SK-N-SH (cell line): ENCODE measurements at regions of chr7 and their contacts with region 1.

Region 1: GRCh38 chr7:156949541-156950380 is at the start of gene NOM1:
- DNase-seq: peak; percentile 99
- H3K4me3 ChIP-seq: peak within 1 kb of the TSS; percentile 85 to 94
- H3K27ac ChIP-seq: peak within 1 kb of the TSS; percentile 63 to 71
- H3K4me1 ChIP-seq: peaks cover 5 to 21% of the 10 kb centered on the region in 2 experiments; a peak in 3 of 4 replicates
- H3K27me3 ChIP-seq: no peaks in the 10 kb centered on the region
- CTCF ChIP-seq: peak; percentile 63
- EP300 ChIP-seq: no peak
- RAD21 ChIP-seq: peak; percentile 48
- polyA plus RNA-seq, gene NOM1: 18.1 and 21.2 TPM in 2 replicates

Region 2: GRCh38 chr7:156534925-156535324 is 414.8 kb before region 1 on chr7:
- CTCF ChIA-PET with region 1: no interaction called
- POLR2A ChIA-PET with region 1: no interaction called
- DNase-seq: no peak
- H3K4me3 ChIP-seq: no peak overlapping the region
- H3K27ac ChIP-seq: no peak overlapping the region
- H3K4me1 ChIP-seq: no peaks in the 10 kb centered on the region
- H3K27me3 ChIP-seq: no peaks in the 10 kb centered on the region; the same call in 1 of the 2 replicates
- CTCF ChIP-seq: no peak
- EP300 ChIP-seq: no peak
- RAD21 ChIP-seq: no peak

Region 3: GRCh38 chr7:156903232-156903909 is 46.4 kb before region 1 on chr7:
- CTCF ChIA-PET with region 1: interaction called, 16 read pairs
- POLR2A ChIA-PET with region 1: no interaction called
- DNase-seq: no peak
- H3K4me3 ChIP-seq: no peak overlapping the region
- H3K27ac ChIP-seq: no peak overlapping the region
- H3K4me1 ChIP-seq: peaks cover 0 to 5% of the 10 kb centered on the region in 2 experiments; a peak in 1 of 4 replicates
- H3K27me3 ChIP-seq: no peaks in the 10 kb centered on the region
- CTCF ChIP-seq: no peak
- EP300 ChIP-seq: no peak
- RAD21 ChIP-seq: no peak

Region 4: DNA sequence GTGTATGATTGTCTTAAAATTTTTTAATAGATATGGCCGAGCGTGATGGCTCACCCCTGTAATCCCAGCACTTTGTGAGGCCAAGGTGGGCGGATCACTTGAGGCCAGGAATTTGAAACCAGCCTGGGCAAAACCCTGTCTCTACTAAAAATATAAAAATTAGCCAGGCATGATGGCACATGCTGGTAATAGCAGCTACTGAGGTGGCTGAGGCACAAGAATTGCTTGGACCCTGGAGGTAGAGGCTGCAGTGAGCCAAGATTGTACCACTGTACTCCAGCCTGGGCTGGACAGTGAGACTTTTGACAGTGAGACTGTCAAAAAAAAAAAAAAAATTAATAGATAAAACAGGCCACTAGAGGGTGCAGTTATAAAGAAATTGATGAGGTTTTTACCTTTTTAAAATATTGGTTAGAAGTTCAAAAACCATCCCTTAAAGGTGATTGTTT is 20.2 kb after region 1 on chr7:
- CTCF ChIA-PET with region 1: interaction called, 73 read pairs
- POLR2A ChIA-PET with region 1: no interaction called
- DNase-seq: no peak
- H3K4me3 ChIP-seq: no peak overlapping the region
- H3K27ac ChIP-seq: no peak overlapping the region
- H3K4me1 ChIP-seq: no peaks in the 10 kb centered on the region
- H3K27me3 ChIP-seq: no peaks in the 10 kb centered on the region
- CTCF ChIP-seq: peak; percentile 74
- EP300 ChIP-seq: no peak
- RAD21 ChIP-seq: peak; percentile 56

Region 5: GRCh38 chr7:157111311-157111710 is 161.6 kb after region 1 on chr7:
- CTCF ChIA-PET with region 1: no interaction called
- POLR2A ChIA-PET with region 1: no interaction called
- DNase-seq: no peak
- H3K4me3 ChIP-seq: no peak overlapping the region; a peak in 1 of 4 replicates
- H3K27ac ChIP-seq: no peak overlapping the region
- H3K4me1 ChIP-seq: no peaks in the 10 kb centered on the region
- H3K27me3 ChIP-seq: peaks cover 47% of the 10 kb centered on the region
- CTCF ChIP-seq: no peak
- EP300 ChIP-seq: no peak
- RAD21 ChIP-seq: no peak

Region 6: DNA sequence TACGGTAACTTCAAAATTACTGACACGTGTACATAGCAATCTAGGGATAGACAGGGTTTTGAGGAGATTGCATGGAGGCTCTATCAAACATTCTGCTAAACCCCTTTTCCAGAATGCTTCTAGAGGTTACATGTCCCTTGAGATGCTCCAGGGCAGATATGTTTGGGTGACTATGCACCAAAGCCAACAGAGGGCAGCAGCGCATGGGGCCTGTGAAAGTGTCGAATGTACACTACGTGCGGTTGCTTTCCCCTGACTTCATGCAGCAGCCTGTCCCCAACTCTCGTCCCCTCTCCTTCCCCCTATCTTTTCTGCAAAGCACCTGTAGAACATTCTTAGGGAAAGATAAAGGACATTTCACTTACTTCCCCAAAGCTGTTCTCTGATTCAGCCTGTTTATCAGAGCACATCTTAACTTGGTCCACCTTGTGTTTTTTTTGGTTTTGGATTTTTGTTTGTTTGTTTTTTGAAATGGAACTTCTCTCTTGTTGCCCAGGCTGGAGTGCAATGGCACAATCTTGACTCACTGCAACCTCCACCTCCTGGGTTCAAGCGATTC is 279.2 kb after region 1 on chr7:
- CTCF ChIA-PET with region 1: interaction called, 42 read pairs
- POLR2A ChIA-PET with region 1: interaction called, 3 read pairs
- DNase-seq: peak; percentile 53
- H3K4me3 ChIP-seq: no peak overlapping the region
- H3K27ac ChIP-seq: no peak overlapping the region
- H3K4me1 ChIP-seq: peaks cover 0 to 6% of the 10 kb centered on the region in 2 experiments; a peak in 2 of 4 replicates
- H3K27me3 ChIP-seq: no peaks in the 10 kb centered on the region
- CTCF ChIP-seq: peak; percentile 57
- EP300 ChIP-seq: no peak
- RAD21 ChIP-seq: peak; percentile 66